ENCODE measurements at regions of chr6 and their contacts with region 1.

Region 1: DNA sequence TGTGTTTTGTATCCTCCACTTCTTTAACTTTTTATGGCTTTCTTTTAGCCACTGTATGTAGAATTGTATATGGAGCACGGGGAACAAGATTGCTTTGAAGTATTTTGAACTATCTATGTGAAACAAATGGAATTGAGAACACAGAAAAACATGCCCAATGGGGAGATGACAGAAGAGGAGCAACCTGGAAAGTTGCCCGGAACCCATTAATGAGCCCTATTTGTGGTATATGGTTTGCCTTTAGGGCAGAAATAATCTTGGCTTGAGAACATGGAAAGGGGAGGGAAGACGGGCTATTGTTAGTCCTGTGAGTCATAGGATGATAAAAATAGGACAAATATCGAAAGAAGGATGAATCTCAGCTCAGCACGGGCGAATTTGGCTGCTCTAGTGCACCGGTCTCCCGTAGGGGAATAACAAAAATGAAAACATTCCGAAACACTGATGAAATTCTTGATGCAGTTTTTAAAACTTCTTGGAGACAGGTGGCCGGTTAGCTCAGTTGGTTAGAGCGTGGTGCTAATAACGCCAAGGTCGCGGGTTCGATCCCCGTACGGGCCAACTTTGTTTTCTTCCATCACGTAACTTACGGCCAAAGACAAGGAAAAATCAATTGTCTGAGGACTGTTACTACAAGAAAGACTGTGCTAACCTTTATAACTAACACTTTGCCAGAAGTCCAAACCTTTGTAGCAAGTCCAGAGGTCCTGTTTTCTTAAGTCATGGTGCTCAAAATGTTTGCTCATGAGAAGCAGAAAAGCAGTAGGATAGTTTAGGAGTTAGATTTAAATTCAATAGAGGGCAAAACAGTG is 15.7 kb downstream of the HMGN4 start:
- DNase-seq: peak; percentile 69 to 83 (median 78)
- H3K4me3 ChIP-seq: peak overlapping the region; percentile 41 to 81 (median 78)
- H3K4me3 Mint-ChIP-seq: no peak overlapping the region
- H3K27ac ChIP-seq: peak overlapping the region in 1 of 2 donors; percentile 21
- H3K27ac Mint-ChIP-seq: no peak overlapping the region
- H3K4me1 ChIP-seq: peaks cover 39 to 40% of the 10 kb centered on the region in 2 donors
- H3K4me1 Mint-ChIP-seq: peaks cover 13% of the 10 kb centered on the region
- H3K27me3 ChIP-seq: no peaks in the 10 kb centered on the region
- H3K27me3 Mint-ChIP-seq: peaks cover 2 to 8% (median 3%) of the 10 kb centered on the region in 3 donors
- CTCF ChIP-seq: no peak

Region 2: GRCh38 chr6:26142026-26142425 is 411.8 kb before region 1 on chr6:
- intact Hi-C with region 1: no loop called
- DNase-seq: no peak
- H3K4me3 ChIP-seq: no peak overlapping the region
- H3K4me3 Mint-ChIP-seq: no peak overlapping the region
- H3K27ac ChIP-seq: no peak overlapping the region
- H3K27ac Mint-ChIP-seq: no peak overlapping the region
- H3K4me1 ChIP-seq: no peaks in the 10 kb centered on the region
- H3K4me1 Mint-ChIP-seq: peaks cover 8% of the 10 kb centered on the region
- H3K27me3 ChIP-seq: no peaks in the 10 kb centered on the region
- H3K27me3 Mint-ChIP-seq: peaks cover 0 to 6% (median 0%) of the 10 kb centered on the region in 3 donors
- CTCF ChIP-seq: no peak

Region 3: GRCh38 chr6:26329763-26330511 is 223.9 kb before region 1 on chr6:
- intact Hi-C with region 1: loop called in 1 of 2 experiments (anchors 10 kb)
- DNase-seq: peak; percentile 43 to 56 (median 45)
- H3K4me3 ChIP-seq: no peak overlapping the region
- H3K4me3 Mint-ChIP-seq: peak overlapping the region in 1 of 2 donors; percentile 84
- H3K27ac ChIP-seq: no peak overlapping the region
- H3K27ac Mint-ChIP-seq: no peak overlapping the region
- H3K4me1 ChIP-seq: peaks cover 16 to 33% of the 10 kb centered on the region in 2 donors
- H3K4me1 Mint-ChIP-seq: peaks cover 38% of the 10 kb centered on the region
- H3K27me3 ChIP-seq: peaks cover 84 to 96% of the 10 kb centered on the region in 2 donors
- H3K27me3 Mint-ChIP-seq: peaks cover 85 to 89% (median 88%) of the 10 kb centered on the region in 3 donors
- CTCF ChIP-seq: no peak

Region 4: GRCh38 chr6:26475823-26476729 is 77.8 kb before region 1 on chr6:
- intact Hi-C with region 1: no loop called
- DNase-seq: no peak
- H3K4me3 ChIP-seq: peak overlapping the region in 1 of 3 experiments; percentile 53
- H3K4me3 Mint-ChIP-seq: peak overlapping the region in 1 of 2 donors; percentile 71
- H3K27ac ChIP-seq: peak overlapping the region; percentile 82 to 90
- H3K27ac Mint-ChIP-seq: peak overlapping the region; percentile 91 to 100 (median 95)
- H3K4me1 ChIP-seq: peaks cover 74 to 84% of the 10 kb centered on the region in 2 donors
- H3K4me1 Mint-ChIP-seq: peaks cover 81% of the 10 kb centered on the region
- H3K27me3 ChIP-seq: no peaks in the 10 kb centered on the region
- H3K27me3 Mint-ChIP-seq: no peaks in the 10 kb centered on the region
- CTCF ChIP-seq: no peak

Region 5: GRCh38 chr6:26596579-26597388 is 42.9 kb after region 1 on chr6 and contains the start of gene ABT1:
- intact Hi-C with region 1: no loop called
- DNase-seq: peak; percentile 96 to 99 (median 99)
- H3K4me3 ChIP-seq: peak within 1 kb of the TSS; percentile 83 to 94 (median 90)
- H3K4me3 Mint-ChIP-seq: no peak within 1 kb of the TSS
- H3K27ac ChIP-seq: peak within 1 kb of the TSS; percentile 82 to 95
- H3K27ac Mint-ChIP-seq: peak within 1 kb of the TSS in 1 of 7 donors; percentile 65
- H3K4me1 ChIP-seq: peaks cover 17 to 39% of the 10 kb centered on the region in 2 donors
- H3K4me1 Mint-ChIP-seq: peaks cover 26% of the 10 kb centered on the region
- H3K27me3 ChIP-seq: peaks cover 19 to 31% of the 10 kb centered on the region in 2 donors
- H3K27me3 Mint-ChIP-seq: peaks cover 19 to 22% (median 19%) of the 10 kb centered on the region in 3 donors
- CTCF ChIP-seq: no peak
- polyA plus RNA-seq, gene ABT1: 11.6 to 40.6 (median 31.7) TPM

Measured in CD14-positive monocyte (primary cell).